PC-9 (cell line): ENCODE measurements at regions of chr11 and their contacts with region 1.

Region 1: GRCh38 chr11:68038718-68039525 is at the start of gene TCIRG1:
- DNase-seq: peak; percentile 73 to 80
- H3K4me3 ChIP-seq: peak within 1 kb of the TSS; percentile 65
- H3K27ac ChIP-seq: peak within 1 kb of the TSS; percentile 65
- H3K4me1 ChIP-seq: peaks cover 35% of the 10 kb centered on the region
- H3K27me3 ChIP-seq: no peaks in the 10 kb centered on the region
- CTCF ChIP-seq: no peak
- total RNA-seq, gene TCIRG1: 125 and 175 TPM in 2 replicates

Region 2: DNA sequence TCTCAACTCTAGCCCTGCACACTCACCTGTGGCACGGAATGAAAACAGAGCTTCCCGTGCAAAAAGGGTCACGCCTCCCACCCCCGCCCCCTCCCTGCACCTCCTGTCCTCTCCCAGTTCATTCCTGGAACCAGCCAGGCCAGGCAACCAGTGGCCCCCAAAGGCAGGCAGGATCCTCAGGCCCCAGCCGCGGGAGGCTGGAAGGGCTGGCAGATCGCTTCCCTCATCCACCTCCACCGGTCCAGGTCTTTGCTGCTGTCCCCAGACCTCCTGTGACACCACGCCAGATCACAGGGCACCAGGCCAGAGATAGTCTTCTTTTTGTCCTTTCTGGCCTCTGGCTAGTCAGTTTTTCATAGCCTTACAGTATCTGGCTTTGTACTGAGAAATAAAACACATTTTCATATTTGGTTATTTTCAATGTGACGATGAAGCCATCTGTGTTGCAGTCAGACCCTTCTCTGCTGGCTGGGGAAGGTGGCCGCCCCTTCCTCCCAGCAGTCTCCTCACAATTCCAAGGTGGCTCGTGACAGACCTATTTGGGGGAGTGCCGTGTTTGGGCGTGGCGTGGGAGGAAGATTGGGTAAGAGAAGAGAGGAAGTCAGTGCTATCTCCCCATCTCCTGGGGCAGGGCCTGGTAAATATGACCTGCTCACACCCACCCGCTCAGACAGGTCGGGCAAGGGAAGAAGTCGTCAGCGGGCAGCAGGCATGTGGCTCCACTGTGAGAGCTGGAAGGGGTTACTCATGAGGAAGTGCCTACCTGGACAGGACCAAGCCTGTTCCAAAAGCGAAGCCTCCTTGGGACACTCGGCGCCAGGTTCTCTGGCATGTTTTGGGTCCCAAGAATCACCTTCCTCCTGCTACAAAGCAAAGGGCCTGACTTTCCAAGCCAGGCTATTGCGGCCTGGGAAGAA is 726.5 kb before region 1 on chr11:
- CTCF ChIA-PET with region 1: no interaction called
- POLR2A ChIA-PET with region 1: no interaction called
- intact Hi-C with region 1: no loop called
- DNase-seq: peak; percentile 97 to 99
- H3K4me3 ChIP-seq: peak overlapping the region; percentile 23; the same call in 1 of the 2 replicates
- H3K27ac ChIP-seq: peak overlapping the region; percentile 87
- H3K4me1 ChIP-seq: peaks cover 56% of the 10 kb centered on the region
- H3K27me3 ChIP-seq: no peaks in the 10 kb centered on the region
- CTCF ChIP-seq: no peak

Region 3: GRCh38 chr11:67507864-67508485 is 530.9 kb before region 1 on chr11 and contains the start of gene CDK2AP2:
- CTCF ChIA-PET with region 1: no interaction called
- POLR2A ChIA-PET with region 1: no interaction called
- intact Hi-C with region 1: no loop called
- DNase-seq: peak; percentile 99 to 100
- H3K4me3 ChIP-seq: peak within 1 kb of the TSS; percentile 66
- H3K27ac ChIP-seq: peak within 1 kb of the TSS; percentile 79
- H3K4me1 ChIP-seq: peaks cover 33% of the 10 kb centered on the region
- H3K27me3 ChIP-seq: peaks cover 4% of the 10 kb centered on the region; the same call in 1 of the 2 replicates
- CTCF ChIP-seq: no peak
- total RNA-seq, gene CDK2AP2: 80.0 and 89.3 TPM in 2 replicates

Region 4: DNA sequence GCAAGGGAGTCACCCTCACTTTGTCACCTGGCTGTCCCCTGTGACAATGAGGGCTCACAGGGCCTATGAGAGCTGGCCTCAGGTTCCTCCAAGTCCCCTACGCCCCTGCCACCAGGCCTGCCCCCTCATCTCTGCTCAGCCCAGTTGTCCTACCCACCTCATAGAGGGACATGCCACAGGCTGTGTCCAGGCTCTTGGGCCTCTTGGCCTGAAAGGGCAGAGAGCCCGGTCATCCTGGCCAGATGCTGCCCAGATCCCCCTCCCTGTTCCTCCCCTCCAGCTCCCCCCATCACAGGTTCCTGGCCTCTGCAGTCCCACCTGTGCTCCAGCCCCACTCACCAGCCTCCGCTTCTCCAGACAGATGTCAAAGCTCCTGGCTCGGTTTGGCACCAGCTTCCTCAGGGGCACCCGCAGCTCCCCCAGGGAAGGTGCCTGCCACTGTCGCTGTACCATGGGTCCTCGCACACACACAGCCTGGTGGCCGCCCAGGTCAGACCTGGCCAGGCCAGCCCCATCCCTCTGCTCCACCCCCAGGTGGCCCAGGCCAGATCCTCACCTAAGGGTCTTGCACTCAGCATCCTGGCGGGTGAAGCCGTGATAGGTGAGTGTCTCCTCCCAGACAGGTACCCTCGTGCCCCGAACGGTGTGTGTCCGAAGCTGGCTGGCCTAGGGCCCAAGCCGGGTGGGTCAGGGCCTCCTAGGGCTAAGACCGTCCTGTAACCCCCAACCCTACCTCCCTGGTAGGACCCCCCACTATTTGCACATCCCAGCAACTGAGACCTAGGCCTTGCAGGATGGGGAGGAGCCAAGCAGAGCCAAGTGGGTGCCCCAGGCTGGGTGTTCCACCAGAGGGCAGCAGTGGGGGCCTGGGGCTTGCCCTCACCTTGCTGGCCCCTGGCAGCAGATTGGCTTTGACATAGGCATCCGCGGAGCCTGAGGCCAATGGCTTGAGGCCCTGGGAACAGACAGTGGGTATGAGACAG is 423.9 kb before region 1 on chr11:
- CTCF ChIA-PET with region 1: interaction called, 11 read pairs
- POLR2A ChIA-PET with region 1: no interaction called
- intact Hi-C with region 1: no loop called
- DNase-seq: peak; percentile 46 to 62
- H3K4me3 ChIP-seq: no peak overlapping the region
- H3K27ac ChIP-seq: no peak overlapping the region
- H3K4me1 ChIP-seq: no peaks in the 10 kb centered on the region
- H3K27me3 ChIP-seq: no peaks in the 10 kb centered on the region
- CTCF ChIP-seq: peak; percentile 72

Region 5: GRCh38 chr11:68061508-68061907 is 22.6 kb after region 1 on chr11:
- CTCF ChIA-PET with region 1: no interaction called
- POLR2A ChIA-PET with region 1: interaction called, 25 read pairs
- intact Hi-C with region 1: no loop called
- DNase-seq: no peak
- H3K4me3 ChIP-seq: no peak overlapping the region
- H3K27ac ChIP-seq: no peak overlapping the region
- H3K4me1 ChIP-seq: no peaks in the 10 kb centered on the region
- H3K27me3 ChIP-seq: no peaks in the 10 kb centered on the region
- CTCF ChIP-seq: no peak

Region 6: GRCh38 chr11:68127714-68128681 is 89.1 kb after region 1 on chr11:
- CTCF ChIA-PET with region 1: no interaction called
- POLR2A ChIA-PET with region 1: interaction called, 19 read pairs
- intact Hi-C with region 1: loop called (anchors 5 kb)
- DNase-seq: peak; percentile 86 to 95
- H3K4me3 ChIP-seq: peak overlapping the region; percentile 57
- H3K27ac ChIP-seq: peak overlapping the region; percentile 97
- H3K4me1 ChIP-seq: peaks cover 81% of the 10 kb centered on the region
- H3K27me3 ChIP-seq: no peaks in the 10 kb centered on the region
- CTCF ChIP-seq: no peak

Region 7: GRCh38 chr11:68193018-68193417 is 154.1 kb after region 1 on chr11:
- CTCF ChIA-PET with region 1: interaction called, 24 read pairs
- POLR2A ChIA-PET with region 1: no interaction called
- intact Hi-C with region 1: no loop called
- DNase-seq: peak in 1 of 2 experiments; percentile 32
- H3K4me3 ChIP-seq: no peak overlapping the region
- H3K27ac ChIP-seq: no peak overlapping the region
- H3K4me1 ChIP-seq: peaks cover 10% of the 10 kb centered on the region; the same call in 1 of the 2 replicates
- H3K27me3 ChIP-seq: no peaks in the 10 kb centered on the region
- CTCF ChIP-seq: no peak